ENCODE measurements at regions of chr17 and their contacts with region 1.

Region 1: DNA sequence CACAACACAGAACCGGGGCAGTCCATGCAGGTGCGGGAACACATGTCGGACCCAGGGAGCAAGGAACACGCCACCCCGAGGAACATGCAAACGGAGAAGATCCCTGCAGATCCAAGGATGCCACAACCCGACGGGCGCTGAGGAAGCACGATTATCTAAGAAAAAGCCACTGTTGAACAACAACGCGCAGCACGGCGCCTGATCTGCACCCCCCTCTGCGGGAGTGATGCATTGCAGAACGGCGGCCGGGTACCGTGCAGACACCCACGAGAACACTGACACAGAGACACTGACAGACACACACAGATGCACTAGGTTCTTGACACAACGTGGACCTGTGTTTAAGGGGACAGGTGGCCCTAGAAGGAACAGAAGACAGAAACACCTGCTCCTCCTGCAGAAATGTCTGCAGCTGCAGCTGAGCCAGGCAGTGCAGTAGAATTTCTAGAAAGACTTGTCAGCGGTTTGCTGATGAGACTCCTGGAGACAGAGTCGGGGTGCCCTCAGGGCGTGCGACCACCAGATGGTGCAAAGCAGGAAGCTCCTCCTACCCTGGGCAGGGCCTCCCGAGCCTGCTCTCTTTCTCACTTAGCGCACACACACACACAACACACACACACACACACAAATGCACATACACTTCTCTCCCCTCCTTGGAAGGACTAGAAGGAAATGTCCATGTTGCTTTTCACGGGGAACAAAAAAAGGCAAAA is 7.5 kb downstream of the NPTX1 start:
- DNase-seq: no peak
- ATAC-seq: no peak
- H3K4me3 ChIP-seq: no peak overlapping the region
- H3K27ac ChIP-seq: no peak overlapping the region
- H3K4me1 ChIP-seq: no peaks in the 10 kb centered on the region
- H3K27me3 ChIP-seq: peaks cover 41% of the 10 kb centered on the region
- CTCF ChIP-seq: no peak

Region 2: GRCh38 chr17:80539022-80539641 is 70.2 kb after region 1 on chr17:
- CTCF ChIA-PET with region 1: no interaction called
- POLR2A ChIA-PET with region 1: interaction called, 24 read pairs
- intact Hi-C with region 1: no loop called
- DNase-seq: no peak
- ATAC-seq: peak; percentile 37; the same call in 1 of the 2 replicates
- H3K4me3 ChIP-seq: no peak overlapping the region
- H3K27ac ChIP-seq: no peak overlapping the region
- H3K4me1 ChIP-seq: no peaks in the 10 kb centered on the region
- H3K27me3 ChIP-seq: no peaks in the 10 kb centered on the region
- CTCF ChIP-seq: no peak